ENCODE measurements at regions of chr11 and their contacts with region 1.

Region 1: DNA sequence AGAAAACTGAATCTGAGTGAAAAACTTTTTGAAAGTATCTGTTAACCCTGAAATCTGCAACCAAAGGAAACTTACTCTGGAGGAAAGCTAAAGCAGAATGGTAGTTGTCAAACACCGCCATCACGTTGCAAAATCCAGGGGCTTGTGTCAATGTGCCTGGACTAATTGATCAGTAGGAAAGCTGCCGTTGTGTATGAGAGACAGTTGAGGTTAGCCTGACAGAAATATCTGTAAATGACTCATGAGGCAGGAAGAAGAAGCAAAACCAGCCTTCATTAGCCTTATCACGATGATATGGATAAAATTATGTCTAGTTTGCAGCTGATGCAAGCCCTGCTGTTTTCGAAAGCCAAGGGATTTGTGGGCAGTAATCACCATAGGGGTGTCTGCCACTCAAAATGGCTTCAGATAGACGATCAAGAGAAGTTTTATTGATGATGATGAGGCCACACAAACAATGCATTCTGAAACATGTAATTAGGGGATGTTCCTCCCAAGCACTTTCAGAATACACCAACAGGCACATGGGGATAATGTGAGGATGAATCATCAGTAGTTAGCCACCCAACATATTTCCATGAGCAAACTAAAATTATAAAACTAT is 8.9 kb downstream of the SCGB1A1 start:
- DNase-seq: peak; percentile 58
- ATAC-seq: no peak
- H3K4me3 ChIP-seq: no peak overlapping the region
- H3K27ac ChIP-seq: peak overlapping the region; percentile 78
- H3K4me1 ChIP-seq: peaks cover 26% of the 10 kb centered on the region
- H3K27me3 ChIP-seq: no peaks in the 10 kb centered on the region
- CTCF ChIP-seq: no peak
- POLR2A ChIP-seq: no peak
- RAD21 ChIP-seq: no peak

Region 2: DNA sequence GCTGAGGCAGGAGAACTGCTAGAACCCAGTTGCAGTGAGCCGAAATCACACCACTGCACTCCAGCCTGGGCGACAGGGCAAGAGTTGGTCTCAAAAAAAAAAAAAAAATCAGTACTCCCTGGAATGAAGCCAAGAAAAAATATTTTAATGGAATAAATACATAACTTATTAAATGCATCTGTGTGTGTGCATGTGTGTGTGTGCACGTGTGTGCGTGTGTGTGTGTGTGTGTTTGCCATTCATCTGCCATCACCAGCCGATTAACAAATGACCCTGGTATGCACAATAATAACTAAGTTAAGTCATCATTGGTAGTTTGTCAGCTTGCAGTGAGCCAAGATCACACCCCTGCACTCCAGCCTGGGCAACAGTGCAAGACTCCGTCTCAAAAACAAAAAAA is 43.9 kb before region 1 on chr11:
- CTCF ChIA-PET with region 1: no interaction called
- POLR2A ChIA-PET with region 1: no interaction called
- dilution Hi-C with region 1: no loop called
- in situ Hi-C with region 1: no loop called
- intact Hi-C with region 1: no loop called
- DNase-seq: no peak
- ATAC-seq: no peak
- H3K4me3 ChIP-seq: no peak overlapping the region
- H3K27ac ChIP-seq: no peak overlapping the region
- H3K4me1 ChIP-seq: no peaks in the 10 kb centered on the region
- H3K27me3 ChIP-seq: peaks cover 9% of the 10 kb centered on the region
- CTCF ChIP-seq: no peak
- POLR2A ChIP-seq: no peak
- RAD21 ChIP-seq: no peak

Region 3: GRCh38 chr11:62394825-62395538 is 32.8 kb before region 1 on chr11:
- CTCF ChIA-PET with region 1: interaction called, 7 read pairs
- POLR2A ChIA-PET with region 1: interaction called, 6 read pairs
- dilution Hi-C with region 1: no loop called
- in situ Hi-C with region 1: no loop called
- intact Hi-C with region 1: loop called (anchors 2 kb)
- DNase-seq: peak; percentile 80
- ATAC-seq: peak; percentile 86
- H3K4me3 ChIP-seq: peak overlapping the region; percentile 36
- H3K27ac ChIP-seq: peak overlapping the region; percentile 54
- H3K4me1 ChIP-seq: peaks cover 15% of the 10 kb centered on the region; the same call in 1 of the 2 replicates
- H3K27me3 ChIP-seq: peaks cover 2% of the 10 kb centered on the region; the same call in 1 of the 2 replicates
- CTCF ChIP-seq: peak; percentile 80
- POLR2A ChIP-seq: no peak
- RAD21 ChIP-seq: peak; percentile 88

Region 4: DNA sequence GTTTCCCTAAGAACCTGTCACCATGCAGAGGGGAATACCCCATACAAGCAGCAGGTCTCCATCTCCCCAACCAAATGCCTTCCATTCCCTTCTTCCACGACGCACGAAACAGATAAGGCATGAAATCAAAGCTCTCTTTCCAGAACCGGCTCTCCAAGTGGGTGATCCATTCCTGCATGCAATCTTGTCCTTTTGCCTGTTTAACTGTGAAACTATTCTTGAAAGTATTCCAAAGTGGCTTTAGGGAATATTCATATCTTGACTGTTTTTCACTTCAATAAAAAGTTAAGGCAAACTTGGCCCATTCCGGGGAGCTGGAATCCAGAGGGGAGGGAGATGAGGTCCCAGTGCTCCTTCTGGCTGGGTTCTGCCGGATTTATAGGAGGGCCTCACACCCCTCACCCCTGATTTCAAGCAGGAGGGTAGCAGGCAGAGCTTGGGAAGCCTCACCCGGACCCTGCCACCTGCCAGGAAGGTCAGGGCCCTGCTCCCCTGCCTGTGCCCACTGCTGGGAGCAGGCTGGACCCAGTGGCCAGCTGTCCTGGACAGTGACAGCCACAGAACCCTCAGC is 52.0 kb after region 1 on chr11:
- CTCF ChIA-PET with region 1: no interaction called
- POLR2A ChIA-PET with region 1: interaction called, 12 read pairs
- dilution Hi-C with region 1: no loop called
- in situ Hi-C with region 1: no loop called
- intact Hi-C with region 1: no loop called
- DNase-seq: no peak
- ATAC-seq: no peak
- H3K4me3 ChIP-seq: no peak overlapping the region
- H3K27ac ChIP-seq: peak overlapping the region; percentile 16; the same call in 1 of the 2 replicates
- H3K4me1 ChIP-seq: peaks cover 10% of the 10 kb centered on the region
- H3K27me3 ChIP-seq: no peaks in the 10 kb centered on the region
- CTCF ChIP-seq: no peak
- POLR2A ChIP-seq: no peak
- RAD21 ChIP-seq: no peak

Region 5: DNA sequence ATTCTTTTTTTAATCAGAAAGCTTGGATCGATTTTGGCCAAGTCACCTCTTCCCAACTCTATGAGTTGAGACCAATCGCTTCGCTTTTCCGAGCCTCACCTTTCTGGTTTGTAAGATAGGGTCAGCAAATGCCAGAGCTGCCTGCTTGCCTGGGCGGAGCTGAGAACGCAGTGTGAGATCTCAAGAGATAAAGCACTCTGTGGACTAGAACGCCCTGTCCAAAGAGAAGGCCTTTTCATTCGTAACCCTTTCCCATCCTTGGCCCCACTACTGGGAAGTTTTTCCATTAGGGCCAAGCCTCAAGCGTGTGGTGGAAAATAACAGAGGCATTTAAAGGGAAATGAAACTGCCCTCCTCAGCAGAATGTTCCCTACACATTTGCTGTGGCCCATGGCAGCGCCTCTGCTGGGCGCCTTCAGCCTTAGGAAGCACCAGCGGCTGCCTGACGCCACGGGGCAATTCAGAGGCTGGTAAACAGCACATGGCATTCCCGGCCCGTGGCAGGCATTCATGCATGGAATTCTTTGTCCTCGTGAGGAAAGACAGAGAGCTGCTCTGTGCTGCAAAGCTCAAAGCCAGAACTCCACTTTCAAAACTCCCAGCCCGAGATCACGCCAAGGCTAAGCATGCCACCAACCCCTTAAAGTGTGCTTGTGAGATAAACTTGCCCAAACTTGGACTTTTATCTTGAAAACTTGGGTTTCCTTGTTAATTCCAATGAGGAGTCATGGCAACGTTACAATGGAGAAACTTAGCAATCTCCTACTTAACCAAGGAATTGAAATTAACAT is 80.7 kb after region 1 on chr11:
- CTCF ChIA-PET with region 1: interaction called, 3 read pairs
- POLR2A ChIA-PET with region 1: no interaction called
- dilution Hi-C with region 1: no loop called
- in situ Hi-C with region 1: no loop called
- intact Hi-C with region 1: loop called (anchors 2 kb)
- DNase-seq: peak; percentile 36
- ATAC-seq: peak; percentile 80
- H3K4me3 ChIP-seq: no peak overlapping the region
- H3K27ac ChIP-seq: peak overlapping the region; percentile 15; the same call in 1 of the 2 replicates
- H3K4me1 ChIP-seq: peaks cover 4% of the 10 kb centered on the region
- H3K27me3 ChIP-seq: no peaks in the 10 kb centered on the region
- CTCF ChIP-seq: peak; percentile 44
- POLR2A ChIP-seq: no peak
- RAD21 ChIP-seq: peak; percentile 43

Region 6: GRCh38 chr11:62542750-62543567 is 115.2 kb after region 1 on chr11:
- CTCF ChIA-PET with region 1: interaction called, 31 read pairs
- POLR2A ChIA-PET with region 1: interaction called, 8 read pairs
- dilution Hi-C with region 1: no loop called
- in situ Hi-C with region 1: no loop called
- intact Hi-C with region 1: loop called (anchors 1 kb)
- DNase-seq: peak; percentile 70
- ATAC-seq: peak; percentile 44
- H3K4me3 ChIP-seq: peak overlapping the region; percentile 85
- H3K27ac ChIP-seq: peak overlapping the region; percentile 94
- H3K4me1 ChIP-seq: peaks cover 50% of the 10 kb centered on the region
- H3K27me3 ChIP-seq: no peaks in the 10 kb centered on the region
- CTCF ChIP-seq: peak; percentile 92
- POLR2A ChIP-seq: no peak
- RAD21 ChIP-seq: peak; percentile 92

Region 7: GRCh38 chr11:62556108-62556871 is 128.6 kb after region 1 on chr11:
- CTCF ChIA-PET with region 1: interaction called, 13 read pairs
- POLR2A ChIA-PET with region 1: no interaction called
- dilution Hi-C with region 1: no loop called
- in situ Hi-C with region 1: loop called (anchors 5 kb)
- intact Hi-C with region 1: loop called (anchors 1 kb)
- DNase-seq: peak; percentile 95
- ATAC-seq: peak; percentile 57
- H3K4me3 ChIP-seq: peak overlapping the region; percentile 3; the same call in 1 of the 2 replicates
- H3K27ac ChIP-seq: peak overlapping the region; percentile 78
- H3K4me1 ChIP-seq: peaks cover 40% of the 10 kb centered on the region
- H3K27me3 ChIP-seq: no peaks in the 10 kb centered on the region
- CTCF ChIP-seq: no peak
- POLR2A ChIP-seq: no peak
- RAD21 ChIP-seq: no peak; the same call in 1 of the 2 replicates

Measured in IMR-90 (cell line).